Heart right ventricle (tissue), 16 donors: ENCODE measurements at regions of chr6 and their contacts with region 1.

Region 1: GRCh38 chr6:109187399-109188114 is 92.2 kb downstream of the CEP57L1 start:
- DNase-seq: peak; percentile 19 to 30
- ATAC-seq: peak in 6 of 8 donors; percentile 55 to 82 (median 70)
- H3K4me3 ChIP-seq: peak overlapping the region in 1 of 10 donors; percentile 22
- H3K27ac ChIP-seq: no peak overlapping the region
- H3K4me1 ChIP-seq: peaks cover 0 to 6% (median 0%) of the 10 kb centered on the region in 9 donors
- H3K27me3 ChIP-seq: peaks cover 0 to 6% (median 0%) of the 10 kb centered on the region in 7 donors
- CTCF ChIP-seq: peak; percentile 77 to 97 (median 95)

Region 2: GRCh38 chr6:109299776-109300564 is 112.4 kb after region 1 on chr6:
- intact Hi-C with region 1: loop called in 1 of 10 experiments (anchors 10 kb)
- DNase-seq: peak in 1 of 2 donors; percentile 62
- ATAC-seq: peak; percentile 88 to 98 (median 95)
- H3K4me3 ChIP-seq: no peak overlapping the region
- H3K27ac ChIP-seq: peak overlapping the region; percentile 64 to 87 (median 80)
- H3K4me1 ChIP-seq: peaks cover 0 to 53% (median 33%) of the 10 kb centered on the region in 9 donors
- H3K27me3 ChIP-seq: no peaks in the 10 kb centered on the region
- CTCF ChIP-seq: no peak